ENCODE measurements at regions of chr15 and their contacts with region 1.

Region 1: DNA sequence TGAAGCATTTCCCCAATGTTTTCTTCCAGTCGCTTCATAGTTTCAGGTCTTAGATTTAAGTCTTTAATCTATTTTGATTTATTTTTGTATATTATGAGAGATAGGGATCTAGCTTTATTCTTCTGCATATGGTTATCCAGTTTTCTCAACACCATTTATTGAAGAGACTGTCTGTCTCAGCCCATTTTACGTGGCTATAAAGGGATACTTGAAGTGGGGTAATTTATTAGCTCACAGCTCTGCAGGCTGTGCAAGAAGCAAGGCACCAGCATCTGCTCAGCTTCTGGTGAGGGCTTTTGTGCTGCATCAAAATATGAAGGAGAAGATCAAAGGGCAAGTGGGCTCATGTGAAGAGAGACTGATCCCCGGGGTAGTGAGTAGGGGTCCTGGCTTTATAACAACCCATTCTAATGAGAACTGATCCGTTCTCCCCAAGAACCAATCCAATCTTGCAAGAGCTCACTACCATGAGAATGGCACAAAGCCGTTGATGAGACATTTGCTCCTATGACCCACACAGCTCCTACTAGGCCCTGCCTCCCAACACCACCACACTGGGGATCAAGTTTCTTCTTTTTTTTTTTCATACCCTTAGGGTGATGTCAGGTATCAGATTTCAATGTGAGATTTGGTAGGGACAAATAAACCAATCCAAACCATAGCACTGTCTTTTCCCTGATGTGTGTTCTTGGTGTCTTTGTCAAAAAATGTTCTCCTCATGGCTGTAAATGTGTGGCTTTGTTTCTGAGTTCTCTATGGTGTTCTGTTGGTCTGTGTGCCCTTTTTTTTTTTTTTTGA is 63.2 kb downstream of the IQGAP1 start:
- DNase-seq: no peak
- H3K4me3 Mint-ChIP-seq: no peak overlapping the region
- H3K27ac Mint-ChIP-seq: no peak overlapping the region
- H3K4me1 Mint-ChIP-seq: no peaks in the 10 kb centered on the region
- H3K27me3 Mint-ChIP-seq: no peaks in the 10 kb centered on the region

Region 2: GRCh38 chr15:90497912-90498311 is 46.7 kb after region 1 on chr15:
- CTCF ChIA-PET with region 1: no interaction called
- POLR2A ChIA-PET with region 1: no interaction called
- intact Hi-C with region 1: loop called (anchors 10 kb)
- DNase-seq: no peak
- H3K4me3 Mint-ChIP-seq: no peak overlapping the region
- H3K27ac Mint-ChIP-seq: no peak overlapping the region
- H3K4me1 Mint-ChIP-seq: no peaks in the 10 kb centered on the region
- H3K27me3 Mint-ChIP-seq: no peaks in the 10 kb centered on the region

Measured in activated CD4-positive, alpha-beta memory T cell treated with anti-CD3 and anti-CD28 coated beads for 36 hours (primary cell).